ENCODE measurements at regions of chr13 and their contacts with region 1.

Region 1: DNA sequence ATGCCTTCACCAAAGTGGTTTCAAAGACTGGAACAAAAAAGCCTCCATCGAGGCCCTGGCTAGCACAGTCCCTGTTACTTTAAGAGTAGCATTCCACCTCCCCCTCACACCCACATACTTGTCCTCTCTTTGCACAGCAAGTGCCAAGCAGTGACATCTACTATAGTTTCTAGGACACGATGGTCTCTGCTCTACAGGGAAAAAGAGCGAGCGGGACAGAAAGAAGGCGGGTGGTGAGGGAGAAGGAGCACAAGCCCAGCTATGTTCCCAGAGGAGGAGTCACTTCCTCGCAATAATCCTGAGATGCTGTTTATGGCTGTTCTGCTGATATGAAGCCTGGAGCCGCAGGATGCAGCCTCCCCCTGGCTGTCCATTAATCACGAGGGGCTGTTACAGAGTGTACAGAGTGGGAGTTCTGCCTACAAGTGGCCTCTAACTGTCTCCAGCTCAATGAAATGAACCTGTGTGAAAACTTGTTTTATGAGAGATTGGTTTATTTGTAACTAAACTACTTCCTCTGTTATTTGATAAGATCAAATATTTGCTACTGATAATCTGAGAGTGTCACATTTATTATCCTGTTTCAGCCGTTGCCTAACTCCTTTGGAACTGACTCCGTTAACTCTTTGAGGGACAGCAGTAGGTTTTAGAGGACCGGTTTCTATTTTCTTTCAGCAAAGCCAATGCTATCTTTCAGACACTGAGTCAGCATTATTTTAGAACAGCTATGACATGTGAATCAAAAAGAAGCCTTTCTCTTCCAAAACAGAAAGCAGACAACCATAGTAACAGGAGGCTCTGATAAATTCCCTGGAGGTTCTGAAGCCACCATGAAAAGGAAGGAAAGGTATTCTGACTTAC is 208.0 kb downstream of the SPRY2 start:
- DNase-seq: peak in 4 of 5 donors; percentile 69 to 85 (median 74)
- ATAC-seq: peak; percentile 95 to 97 (median 96)
- H3K4me3 ChIP-seq: peak overlapping the region in 11 of 12 donors; percentile 5 to 51 (median 36)
- H3K27ac ChIP-seq: peak overlapping the region; percentile 80 to 95 (median 88)
- H3K4me1 ChIP-seq: peaks cover 5 to 44% (median 29%) of the 10 kb centered on the region in 12 donors
- H3K27me3 ChIP-seq: no peaks in the 10 kb centered on the region
- CTCF ChIP-seq: peak in 3 of 12 donors; percentile 13 to 30 (median 26)
- POLR2A ChIP-seq: peak in 1 of 2 donors; percentile 55

Region 2: DNA sequence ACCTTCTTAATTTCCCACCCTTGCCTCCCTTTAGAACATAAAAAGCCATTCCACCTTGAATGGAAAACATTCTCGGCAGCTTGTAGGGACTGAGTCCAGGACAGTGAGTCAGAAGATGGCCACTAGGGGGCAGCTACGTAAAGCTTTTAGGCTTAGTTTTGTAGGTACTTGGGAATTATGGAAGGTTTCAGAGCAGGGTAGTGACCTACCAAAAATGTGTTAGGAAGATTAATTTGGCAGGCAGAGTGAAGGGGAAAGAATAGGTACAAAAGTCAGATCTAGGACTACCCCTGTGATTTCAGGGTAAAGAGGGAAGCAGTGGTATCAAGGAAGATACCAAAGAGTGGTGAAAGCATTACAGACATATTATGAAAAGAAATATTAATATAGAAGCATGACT is 453.6 kb before region 1 on chr13:
- intact Hi-C with region 1: loop called in 2 of 10 experiments (anchors 5 to 10 kb)
- DNase-seq: peak; percentile 58 to 75 (median 69)
- ATAC-seq: peak in 3 of 4 donors; percentile 56 to 80 (median 72)
- H3K4me3 ChIP-seq: no peak overlapping the region
- H3K27ac ChIP-seq: no peak overlapping the region
- H3K4me1 ChIP-seq: peaks cover 0 to 8% (median 1%) of the 10 kb centered on the region in 12 donors
- H3K27me3 ChIP-seq: no peaks in the 10 kb centered on the region
- CTCF ChIP-seq: peak; percentile 67 to 84 (median 78)
- POLR2A ChIP-seq: no peak

Region 3: GRCh38 chr13:79782541-79783205 is 350.3 kb before region 1 on chr13:
- intact Hi-C with region 1: loop called in 2 of 10 experiments (anchors 5 kb)
- DNase-seq: peak; percentile 62 to 88 (median 73)
- ATAC-seq: peak; percentile 96 to 99 (median 98)
- H3K4me3 ChIP-seq: peak overlapping the region in 2 of 12 donors; percentile 12 to 15
- H3K27ac ChIP-seq: peak overlapping the region in 7 of 12 donors; percentile 9 to 47 (median 25)
- H3K4me1 ChIP-seq: peaks cover 0 to 29% (median 9%) of the 10 kb centered on the region in 12 donors
- H3K27me3 ChIP-seq: no peaks in the 10 kb centered on the region
- CTCF ChIP-seq: no peak
- POLR2A ChIP-seq: no peak

Region 4: GRCh38 chr13:80083853-80084676 is 48.9 kb before region 1 on chr13:
- intact Hi-C with region 1: loop called in 2 of 10 experiments (anchors 10 kb)
- DNase-seq: peak in 1 of 5 donors; percentile 16
- ATAC-seq: peak in 2 of 4 donors; percentile 26 to 79
- H3K4me3 ChIP-seq: peak overlapping the region in 2 of 12 donors; percentile 12 to 19
- H3K27ac ChIP-seq: peak overlapping the region in 7 of 12 donors; percentile 2 to 78 (median 13)
- H3K4me1 ChIP-seq: peaks cover 2 to 19% (median 9%) of the 10 kb centered on the region in 12 donors
- H3K27me3 ChIP-seq: no peaks in the 10 kb centered on the region
- CTCF ChIP-seq: no peak
- POLR2A ChIP-seq: no peak

Region 5: GRCh38 chr13:80235166-80235966 is 102.4 kb after region 1 on chr13:
- intact Hi-C with region 1: no loop called
- DNase-seq: no peak
- ATAC-seq: peak in 3 of 4 donors; percentile 32 to 34 (median 32)
- H3K4me3 ChIP-seq: peak overlapping the region in 6 of 12 donors; percentile 1 to 33 (median 17)
- H3K27ac ChIP-seq: peak overlapping the region in 6 of 12 donors; percentile 2 to 50 (median 20)
- H3K4me1 ChIP-seq: peaks cover 0 to 11% (median 7%) of the 10 kb centered on the region in 12 donors
- H3K27me3 ChIP-seq: no peaks in the 10 kb centered on the region
- CTCF ChIP-seq: no peak
- POLR2A ChIP-seq: no peak

Region 6: GRCh38 chr13:80469853-80470381 is 336.9 kb after region 1 on chr13:
- intact Hi-C with region 1: loop called in 1 of 10 experiments (anchors 10 kb)
- DNase-seq: peak; percentile 73 to 89 (median 76)
- ATAC-seq: peak; percentile 98 to 100 (median 98)
- H3K4me3 ChIP-seq: peak overlapping the region in 1 of 12 donors; percentile 4
- H3K27ac ChIP-seq: peak overlapping the region; percentile 79 to 96 (median 86)
- H3K4me1 ChIP-seq: peaks cover 8 to 36% (median 24%) of the 10 kb centered on the region in 12 donors
- H3K27me3 ChIP-seq: no peaks in the 10 kb centered on the region
- CTCF ChIP-seq: no peak
- POLR2A ChIP-seq: no peak